SK-N-SH (cell line): ENCODE measurements at regions of chr7 and their contacts with region 1.

Region 1: DNA sequence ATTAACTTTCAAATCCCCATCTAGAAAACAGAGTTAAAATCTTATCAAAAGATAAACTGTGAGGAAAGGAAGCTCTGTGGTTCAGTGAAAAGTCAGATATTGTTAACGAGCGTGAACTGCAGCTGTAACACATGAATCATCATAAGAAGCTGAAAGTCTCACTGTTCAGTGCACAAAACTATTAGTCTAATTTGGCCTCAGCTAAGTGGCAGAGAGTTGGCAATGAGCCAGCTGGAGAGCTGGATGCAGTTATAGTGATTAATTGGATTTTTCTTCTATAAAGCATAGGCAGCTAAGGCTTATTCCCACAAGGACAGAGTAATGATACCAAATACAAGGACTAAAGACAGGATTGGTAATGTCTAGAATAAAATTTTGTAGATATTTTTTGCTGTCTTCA is 101.1 kb upstream of the ABCB5 start:
- DNase-seq: peak; percentile 58
- H3K4me3 ChIP-seq: no peak overlapping the region
- H3K27ac ChIP-seq: peak overlapping the region in 1 of 2 experiments; percentile 65; a peak in 2 of 4 replicates
- H3K4me1 ChIP-seq: peaks cover 0 to 12% of the 10 kb centered on the region in 2 experiments; a peak in 2 of 4 replicates
- H3K27me3 ChIP-seq: no peaks in the 10 kb centered on the region
- CTCF ChIP-seq: no peak
- EP300 ChIP-seq: peak in 1 of 2 experiments; percentile 98; a peak in 2 of 4 replicates
- RAD21 ChIP-seq: peak; percentile 49

Region 2: DNA sequence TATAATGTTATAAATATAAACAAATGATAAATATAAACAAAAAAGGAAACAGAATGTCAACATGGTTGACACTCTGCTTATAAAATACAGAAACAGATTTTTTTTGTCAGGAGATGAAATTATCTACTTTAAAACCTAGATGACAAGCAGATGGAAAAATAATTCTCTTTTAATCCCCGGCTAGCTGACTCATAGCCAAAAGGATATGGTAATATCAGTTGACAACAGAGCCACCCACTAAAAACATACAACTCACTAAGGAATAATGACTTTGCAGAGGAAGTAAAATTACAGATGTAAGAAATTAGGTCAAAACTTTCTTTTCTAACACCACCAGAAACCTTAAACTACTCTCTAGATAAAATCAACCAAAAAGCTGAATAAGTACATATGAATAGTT is 30.0 kb before region 1 on chr7:
- CTCF ChIA-PET with region 1: no interaction called
- POLR2A ChIA-PET with region 1: no interaction called
- DNase-seq: no peak
- H3K4me3 ChIP-seq: no peak overlapping the region
- H3K27ac ChIP-seq: no peak overlapping the region
- H3K4me1 ChIP-seq: peaks cover 0 to 4% of the 10 kb centered on the region in 2 experiments; a peak in 1 of 4 replicates
- H3K27me3 ChIP-seq: no peaks in the 10 kb centered on the region
- CTCF ChIP-seq: no peak
- EP300 ChIP-seq: no peak
- RAD21 ChIP-seq: no peak

Region 3: GRCh38 chr7:20542594-20542993 is 28.2 kb after region 1 on chr7:
- CTCF ChIA-PET with region 1: interaction called, 10 read pairs
- POLR2A ChIA-PET with region 1: no interaction called
- DNase-seq: peak; percentile 33
- H3K4me3 ChIP-seq: no peak overlapping the region
- H3K27ac ChIP-seq: peak overlapping the region in 1 of 2 experiments; percentile 99; a peak in 2 of 4 replicates
- H3K4me1 ChIP-seq: peaks cover 0 to 21% of the 10 kb centered on the region in 2 experiments; a peak in 2 of 4 replicates
- H3K27me3 ChIP-seq: no peaks in the 10 kb centered on the region
- CTCF ChIP-seq: no peak
- EP300 ChIP-seq: no peak
- RAD21 ChIP-seq: peak; percentile 10; the same call in 1 of the 2 replicates